CD4-positive, alpha-beta T cell (primary cell): ENCODE measurements at regions of chr4 and their contacts with region 1.

Region 1: GRCh38 chr4:169485791-169486742 is 126.3 kb downstream of the NEK1 start:
- DNase-seq: peak in 6 of 14 experiments; percentile 5 to 57 (median 38)
- ATAC-seq: no peak
- H3K4me3 ChIP-seq: no peak overlapping the region
- H3K4me3 Mint-ChIP-seq: no peak overlapping the region
- H3K27ac ChIP-seq: no peak overlapping the region
- H3K27ac Mint-ChIP-seq: no peak overlapping the region
- H3K4me1 ChIP-seq: no peaks in the 10 kb centered on the region
- H3K4me1 Mint-ChIP-seq: no peaks in the 10 kb centered on the region
- H3K27me3 ChIP-seq: no peaks in the 10 kb centered on the region
- H3K27me3 Mint-ChIP-seq: no peaks in the 10 kb centered on the region
- CTCF ChIP-seq: peak; percentile 62

Region 2: DNA sequence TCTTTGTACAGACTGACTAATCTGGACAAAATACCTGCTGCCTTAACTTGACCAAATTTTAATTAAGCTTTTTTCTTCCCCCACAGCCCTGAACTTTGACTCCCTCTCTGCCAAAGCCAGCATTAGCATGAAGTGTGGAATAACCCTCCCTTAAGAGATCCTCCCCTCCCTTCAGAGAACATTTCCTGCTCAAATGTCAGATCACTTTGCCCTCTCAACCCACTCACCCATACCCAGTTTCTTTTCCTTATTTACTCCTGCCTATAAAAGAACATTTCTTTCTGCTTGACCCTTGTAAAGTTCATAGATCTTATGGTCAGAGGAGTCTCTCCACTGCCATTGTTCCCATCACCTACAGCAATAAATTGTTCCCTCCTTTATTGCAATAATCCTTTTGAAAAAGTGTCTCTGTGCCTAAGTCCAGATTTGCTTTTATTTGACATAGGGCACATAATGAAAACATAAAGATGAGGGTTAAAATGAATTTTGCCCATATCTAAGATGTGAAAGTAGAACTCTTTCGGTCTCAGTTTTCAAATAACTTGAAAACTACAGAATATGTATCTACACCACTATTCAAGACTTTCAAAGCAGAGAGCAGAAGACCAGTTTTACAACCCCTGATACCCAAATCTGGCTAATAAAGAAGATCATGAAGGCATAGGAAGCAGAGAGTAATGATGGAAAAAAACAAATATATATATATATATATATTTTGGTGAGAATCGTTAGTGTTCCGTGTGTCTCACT is 1683.4 kb before region 1 on chr4:
- CTCF ChIA-PET with region 1: no interaction called
- POLR2A ChIA-PET with region 1: no interaction called
- intact Hi-C with region 1: no loop called
- DNase-seq: no peak
- ATAC-seq: no peak
- H3K4me3 ChIP-seq: no peak overlapping the region
- H3K4me3 Mint-ChIP-seq: no peak overlapping the region
- H3K27ac ChIP-seq: no peak overlapping the region
- H3K27ac Mint-ChIP-seq: no peak overlapping the region
- H3K4me1 ChIP-seq: no peaks in the 10 kb centered on the region
- H3K4me1 Mint-ChIP-seq: no peaks in the 10 kb centered on the region
- H3K27me3 ChIP-seq: no peaks in the 10 kb centered on the region
- H3K27me3 Mint-ChIP-seq: no peaks in the 10 kb centered on the region
- CTCF ChIP-seq: no peak

Region 3: GRCh38 chr4:168183717-168184608 is 1302.1 kb before region 1 on chr4:
- CTCF ChIA-PET with region 1: no interaction called
- POLR2A ChIA-PET with region 1: no interaction called
- intact Hi-C with region 1: loop called (anchors 5 kb)
- DNase-seq: peak in 3 of 14 experiments; percentile 20 to 30 (median 26)
- ATAC-seq: no peak
- H3K4me3 ChIP-seq: no peak overlapping the region
- H3K4me3 Mint-ChIP-seq: no peak overlapping the region
- H3K27ac ChIP-seq: no peak overlapping the region
- H3K27ac Mint-ChIP-seq: no peak overlapping the region
- H3K4me1 ChIP-seq: no peaks in the 10 kb centered on the region
- H3K4me1 Mint-ChIP-seq: no peaks in the 10 kb centered on the region
- H3K27me3 ChIP-seq: no peaks in the 10 kb centered on the region
- H3K27me3 Mint-ChIP-seq: no peaks in the 10 kb centered on the region
- CTCF ChIP-seq: peak; percentile 60

Region 4: GRCh38 chr4:168923526-168924194 is 562.4 kb before region 1 on chr4:
- CTCF ChIA-PET with region 1: no interaction called
- POLR2A ChIA-PET with region 1: no interaction called
- intact Hi-C with region 1: loop called (anchors 1 to 2 kb)
- DNase-seq: peak in 13 of 14 experiments; percentile 3 to 79 (median 38)
- ATAC-seq: peak; percentile 46
- H3K4me3 ChIP-seq: no peak overlapping the region
- H3K4me3 Mint-ChIP-seq: no peak overlapping the region
- H3K27ac ChIP-seq: no peak overlapping the region
- H3K27ac Mint-ChIP-seq: no peak overlapping the region
- H3K4me1 ChIP-seq: no peaks in the 10 kb centered on the region
- H3K4me1 Mint-ChIP-seq: no peaks in the 10 kb centered on the region
- H3K27me3 ChIP-seq: no peaks in the 10 kb centered on the region
- H3K27me3 Mint-ChIP-seq: no peaks in the 10 kb centered on the region
- CTCF ChIP-seq: peak; percentile 86

Region 5: GRCh38 chr4:168995537-168996295 is 490.4 kb before region 1 on chr4:
- CTCF ChIA-PET with region 1: no interaction called
- POLR2A ChIA-PET with region 1: no interaction called
- intact Hi-C with region 1: loop called in 1 of 2 experiments (anchors 10 kb)
- DNase-seq: peak in 3 of 14 experiments; percentile 27 to 34 (median 29)
- ATAC-seq: no peak
- H3K4me3 ChIP-seq: no peak overlapping the region
- H3K4me3 Mint-ChIP-seq: no peak overlapping the region
- H3K27ac ChIP-seq: no peak overlapping the region
- H3K27ac Mint-ChIP-seq: no peak overlapping the region
- H3K4me1 ChIP-seq: no peaks in the 10 kb centered on the region
- H3K4me1 Mint-ChIP-seq: peaks cover 8% of the 10 kb centered on the region
- H3K27me3 ChIP-seq: no peaks in the 10 kb centered on the region
- H3K27me3 Mint-ChIP-seq: no peaks in the 10 kb centered on the region
- CTCF ChIP-seq: no peak